ENCODE measurements at regions of chr19 and their contacts with region 1.

Region 1: GRCh38 chr19:6718741-6719539 is 1.5 kb downstream of the C3 start:
- DNase-seq: no peak
- H3K4me3 Mint-ChIP-seq: no peak overlapping the region
- H3K27ac Mint-ChIP-seq: no peak overlapping the region
- H3K4me1 Mint-ChIP-seq: peaks cover 32% of the 10 kb centered on the region
- H3K27me3 Mint-ChIP-seq: peaks cover 4% of the 10 kb centered on the region

Region 2: GRCh38 chr19:6632002-6632621 is 86.8 kb before region 1 on chr19:
- intact Hi-C with region 1: loop called (anchors 5 kb)
- DNase-seq: peak; percentile 76
- H3K4me3 Mint-ChIP-seq: no peak overlapping the region
- H3K27ac Mint-ChIP-seq: no peak overlapping the region
- H3K4me1 Mint-ChIP-seq: peaks cover 29% of the 10 kb centered on the region
- H3K27me3 Mint-ChIP-seq: peaks cover 4% of the 10 kb centered on the region

Region 3: GRCh38 chr19:6680151-6680694 is 38.7 kb before region 1 on chr19:
- intact Hi-C with region 1: loop called (anchors 5 kb)
- DNase-seq: no peak
- H3K4me3 Mint-ChIP-seq: no peak overlapping the region
- H3K27ac Mint-ChIP-seq: peak overlapping the region; percentile 68
- H3K4me1 Mint-ChIP-seq: peaks cover 52% of the 10 kb centered on the region
- H3K27me3 Mint-ChIP-seq: peaks cover 9% of the 10 kb centered on the region

Region 4: GRCh38 chr19:6743066-6743465 is 24.1 kb after region 1 on chr19:
- intact Hi-C with region 1: no loop called
- DNase-seq: no peak
- H3K4me3 Mint-ChIP-seq: peak overlapping the region; percentile 7
- H3K27ac Mint-ChIP-seq: no peak overlapping the region
- H3K4me1 Mint-ChIP-seq: peaks cover 26% of the 10 kb centered on the region
- H3K27me3 Mint-ChIP-seq: no peaks in the 10 kb centered on the region

Region 5: GRCh38 chr19:6753178-6754031 is 34.5 kb after region 1 on chr19:
- intact Hi-C with region 1: loop called (anchors 1 kb)
- DNase-seq: peak; percentile 76
- H3K4me3 Mint-ChIP-seq: peak overlapping the region; percentile 75
- H3K27ac Mint-ChIP-seq: peak overlapping the region; percentile 88
- H3K4me1 Mint-ChIP-seq: peaks cover 19% of the 10 kb centered on the region
- H3K27me3 Mint-ChIP-seq: no peaks in the 10 kb centered on the region

Measured in activated T-helper 1 cell treated with anti-CD3 and anti-CD28 coated beads, Interleukin-12 subunit alpha, Interleukin-12 subunit beta, Interleukin-2, Interleukin-4 antibody, amounts not matched to agents 30 ng/mL and 10 ng/mL and 1 ng/mL, durations not matched to agents 14 hours and 24 hours and 36 hours (primary cell).